HepG2 (cell line): ENCODE measurements at regions of chr6 and their contacts with region 1.

Region 1: DNA sequence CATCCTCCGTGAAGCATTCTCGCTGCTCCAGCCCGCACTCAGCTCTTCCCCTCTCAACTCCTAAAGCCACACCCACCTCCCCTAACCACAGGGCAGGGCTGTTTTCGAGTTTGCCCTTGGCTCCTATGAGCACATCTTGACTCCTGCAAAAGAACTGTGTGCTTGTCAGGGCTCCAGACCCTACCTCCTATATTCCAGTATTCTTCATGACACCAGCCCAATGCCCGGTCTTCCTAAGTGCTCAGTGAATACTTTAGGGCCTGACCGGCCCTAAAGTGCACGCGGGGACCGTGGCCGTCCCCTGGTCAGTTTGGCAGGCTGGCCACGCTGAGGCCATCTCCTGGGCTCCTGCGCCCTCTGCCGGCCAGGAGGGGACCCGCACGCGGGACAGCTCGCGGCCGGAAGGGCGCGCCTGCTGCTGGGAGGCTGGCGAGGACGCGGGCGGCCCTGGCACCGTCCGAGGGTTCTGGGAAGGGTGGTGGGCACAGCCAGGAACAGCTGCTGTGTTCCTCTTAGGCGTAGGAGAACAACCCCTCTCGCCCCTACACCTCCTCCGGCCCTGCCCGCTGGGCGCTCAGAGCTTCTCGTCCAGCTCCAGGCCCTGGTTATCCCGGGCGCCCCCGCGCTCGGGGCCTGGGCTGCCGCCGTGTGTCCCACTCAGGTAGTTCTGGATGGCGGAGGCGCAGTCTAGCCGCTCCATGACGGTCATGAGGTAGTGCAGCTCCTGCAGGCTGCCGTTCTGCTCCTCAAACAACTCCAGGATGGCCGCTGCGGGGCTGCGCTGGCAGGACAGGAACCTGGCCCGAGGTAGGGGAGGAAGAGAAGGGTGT is 11.0 kb downstream of the UNC5CL start:
- DNase-seq: peak; percentile 47
- ATAC-seq: peak; percentile 95
- H3K4me3 ChIP-seq: peak overlapping the region in 1 of 3 experiments; percentile 45; a peak in 1 of 6 replicates
- H3K27ac ChIP-seq: no peak overlapping the region
- H3K4me1 ChIP-seq: peaks cover 19% of the 10 kb centered on the region
- H3K27me3 ChIP-seq: no peaks in the 10 kb centered on the region
- CTCF ChIP-seq: peak; percentile 99
- EP300 ChIP-seq: no peak
- POLR2A ChIP-seq: no peak
- RAD21 ChIP-seq: peak; percentile 99

Region 2: DNA sequence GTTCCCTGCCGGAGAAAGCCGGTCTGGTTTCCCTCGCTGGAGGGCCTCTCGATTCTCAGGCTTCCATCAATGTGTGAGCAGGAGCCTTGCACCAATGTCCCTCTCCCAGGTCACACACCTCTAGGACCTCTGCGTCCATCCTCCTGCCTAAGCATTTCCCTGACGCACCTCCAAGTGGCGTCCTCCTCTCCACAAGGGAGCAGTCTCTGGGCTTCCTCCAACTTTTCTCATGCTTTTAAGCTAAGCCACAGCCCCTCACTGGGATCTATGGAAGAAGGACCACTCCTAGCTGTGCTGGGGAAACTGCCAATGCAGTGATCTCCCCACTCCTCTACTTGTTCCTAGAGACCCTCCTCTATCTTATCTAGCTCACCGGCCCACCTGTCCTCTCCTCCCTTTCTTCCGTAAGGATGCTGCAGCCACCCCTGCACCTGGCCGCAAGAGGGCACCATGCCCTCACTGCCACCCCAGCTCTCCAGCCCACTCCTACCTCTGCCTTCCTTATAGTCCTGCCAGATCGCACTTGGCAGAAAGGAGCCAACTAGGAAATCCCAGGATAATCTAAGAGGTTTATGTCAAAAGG is 699.5 kb before region 1 on chr6:
- CTCF ChIA-PET with region 1: no interaction called
- POLR2A ChIA-PET with region 1: no interaction called
- in situ Hi-C with region 1: loop called (anchors 25 kb)
- intact Hi-C with region 1: no loop called
- DNase-seq: no peak
- ATAC-seq: peak; percentile 87
- H3K4me3 ChIP-seq: no peak overlapping the region
- H3K27ac ChIP-seq: no peak overlapping the region
- H3K4me1 ChIP-seq: no peaks in the 10 kb centered on the region
- H3K27me3 ChIP-seq: peaks cover under 1 to 3% of the 10 kb centered on the region in 2 experiments; a peak in 1 of 5 replicates
- CTCF ChIP-seq: peak; percentile 90
- EP300 ChIP-seq: no peak
- POLR2A ChIP-seq: no peak
- RAD21 ChIP-seq: peak; percentile 59